ENCODE measurements at regions of chr7 and their contacts with region 1.

Region 1: DNA sequence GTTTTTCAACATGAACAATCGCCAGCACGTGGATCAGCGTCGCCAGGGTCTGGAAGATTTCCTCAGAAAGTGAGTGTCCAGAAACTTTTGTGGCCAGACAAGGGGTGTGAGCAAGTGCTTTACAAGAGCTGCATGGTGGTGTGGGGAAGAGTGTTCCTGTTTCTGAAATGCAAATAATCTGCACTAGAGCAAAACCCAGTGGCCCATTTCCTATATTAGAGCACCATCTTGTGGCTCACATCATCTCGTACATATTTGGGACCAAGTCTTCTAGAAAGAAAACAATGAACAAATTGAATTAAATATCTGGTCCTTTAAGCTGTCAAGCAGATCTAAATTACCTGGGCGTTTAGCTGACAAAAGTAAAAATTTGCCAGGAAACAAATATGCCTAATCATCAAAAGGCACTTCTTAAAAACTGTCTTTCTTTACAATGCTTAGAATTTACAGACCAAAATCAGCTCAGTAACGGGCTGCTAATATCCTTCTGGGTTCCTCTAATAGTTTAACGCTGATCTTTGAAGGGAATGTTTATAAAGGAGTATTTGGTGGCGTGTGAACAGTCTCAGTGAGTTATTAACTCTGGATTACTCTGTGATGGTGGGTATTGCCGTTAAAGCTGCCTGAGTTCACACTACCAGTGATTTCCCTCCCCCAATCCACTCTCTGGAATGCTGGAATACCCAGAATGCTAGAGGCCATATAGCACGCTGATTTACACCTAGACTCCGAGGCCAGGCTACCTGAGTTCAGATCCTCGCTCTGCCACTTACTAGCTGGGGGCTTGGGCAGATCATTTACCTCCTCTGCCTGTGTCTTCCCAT is 73.6 kb downstream of the SNX10 start:
- DNase-seq: no peak
- H3K4me3 ChIP-seq: no peak overlapping the region
- H3K27ac ChIP-seq: no peak overlapping the region
- H3K4me1 ChIP-seq: no peaks in the 10 kb centered on the region; a peak in 1 of 7 replicates
- H3K27me3 ChIP-seq: no peaks in the 10 kb centered on the region
- CTCF ChIP-seq: peak in 2 of 3 experiments; percentile 64 to 73; a peak in 3 of 4 replicates
- EP300 ChIP-seq: no peak
- POLR2A ChIP-seq: no peak
- RAD21 ChIP-seq: peak; percentile 95 to 98

Region 2: DNA sequence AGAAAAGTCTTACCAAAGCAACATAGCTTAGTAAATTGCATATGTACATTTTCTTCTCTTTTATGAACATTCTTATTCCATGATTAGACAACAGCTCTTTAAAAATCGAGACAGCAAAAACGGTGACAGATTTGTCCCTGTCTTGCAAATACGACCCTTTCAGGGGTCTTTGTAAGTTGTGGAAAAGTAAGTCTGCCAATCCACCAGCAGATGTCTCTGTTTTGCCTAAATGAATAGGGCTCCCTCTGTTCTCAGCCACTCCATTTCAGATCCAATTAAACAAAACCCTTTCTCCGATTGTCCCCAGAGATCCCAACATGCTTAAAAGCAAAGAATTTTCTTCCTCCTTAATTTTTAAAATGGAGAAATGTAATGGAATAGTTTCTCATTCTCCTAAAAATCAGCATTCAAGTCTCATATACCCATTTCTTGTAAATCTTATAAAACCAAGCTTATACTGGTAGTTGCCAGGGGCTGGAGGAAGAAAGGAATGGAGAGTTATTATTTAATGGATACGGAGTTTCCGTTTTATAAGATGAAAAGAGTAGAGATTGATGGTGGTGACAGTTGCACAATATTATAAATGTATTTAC is 274.3 kb before region 1 on chr7:
- CTCF ChIA-PET with region 1: interaction called, 15 read pairs
- POLR2A ChIA-PET with region 1: no interaction called
- DNase-seq: no peak
- H3K4me3 ChIP-seq: peak overlapping the region in 1 of 4 experiments; percentile 19; a peak in 1 of 8 replicates
- H3K27ac ChIP-seq: no peak overlapping the region
- H3K4me1 ChIP-seq: peaks cover 0 to 3% (median 3%) of the 10 kb centered on the region in 4 experiments; a peak in 3 of 7 replicates
- H3K27me3 ChIP-seq: no peaks in the 10 kb centered on the region
- CTCF ChIP-seq: peak in 2 of 3 experiments; percentile 63 to 76; a peak in 3 of 4 replicates
- EP300 ChIP-seq: no peak
- POLR2A ChIP-seq: no peak
- RAD21 ChIP-seq: peak; percentile 84 to 87

Region 3: GRCh38 chr7:26193432-26194207 is 171.7 kb before region 1 on chr7:
- CTCF ChIA-PET with region 1: interaction called, 9 read pairs
- POLR2A ChIA-PET with region 1: interaction called, 22 read pairs
- DNase-seq: no peak
- H3K4me3 ChIP-seq: no peak overlapping the region
- H3K27ac ChIP-seq: no peak overlapping the region
- H3K4me1 ChIP-seq: peaks cover 0 to 6% (median 0%) of the 10 kb centered on the region in 4 experiments; a peak in 3 of 7 replicates
- H3K27me3 ChIP-seq: no peaks in the 10 kb centered on the region
- CTCF ChIP-seq: no peak
- EP300 ChIP-seq: no peak
- POLR2A ChIP-seq: peak in 1 of 2 experiments; percentile 34; a peak in 2 of 3 replicates
- RAD21 ChIP-seq: no peak

Region 4: GRCh38 chr7:26337232-26337865 is 27.9 kb before region 1 on chr7:
- CTCF ChIA-PET with region 1: no interaction called
- POLR2A ChIA-PET with region 1: no interaction called
- DNase-seq: no peak
- H3K4me3 ChIP-seq: no peak overlapping the region
- H3K27ac ChIP-seq: no peak overlapping the region
- H3K4me1 ChIP-seq: no peaks in the 10 kb centered on the region; a peak in 2 of 7 replicates
- H3K27me3 ChIP-seq: no peaks in the 10 kb centered on the region
- CTCF ChIP-seq: no peak
- EP300 ChIP-seq: no peak
- POLR2A ChIP-seq: no peak
- RAD21 ChIP-seq: no peak

Region 5: DNA sequence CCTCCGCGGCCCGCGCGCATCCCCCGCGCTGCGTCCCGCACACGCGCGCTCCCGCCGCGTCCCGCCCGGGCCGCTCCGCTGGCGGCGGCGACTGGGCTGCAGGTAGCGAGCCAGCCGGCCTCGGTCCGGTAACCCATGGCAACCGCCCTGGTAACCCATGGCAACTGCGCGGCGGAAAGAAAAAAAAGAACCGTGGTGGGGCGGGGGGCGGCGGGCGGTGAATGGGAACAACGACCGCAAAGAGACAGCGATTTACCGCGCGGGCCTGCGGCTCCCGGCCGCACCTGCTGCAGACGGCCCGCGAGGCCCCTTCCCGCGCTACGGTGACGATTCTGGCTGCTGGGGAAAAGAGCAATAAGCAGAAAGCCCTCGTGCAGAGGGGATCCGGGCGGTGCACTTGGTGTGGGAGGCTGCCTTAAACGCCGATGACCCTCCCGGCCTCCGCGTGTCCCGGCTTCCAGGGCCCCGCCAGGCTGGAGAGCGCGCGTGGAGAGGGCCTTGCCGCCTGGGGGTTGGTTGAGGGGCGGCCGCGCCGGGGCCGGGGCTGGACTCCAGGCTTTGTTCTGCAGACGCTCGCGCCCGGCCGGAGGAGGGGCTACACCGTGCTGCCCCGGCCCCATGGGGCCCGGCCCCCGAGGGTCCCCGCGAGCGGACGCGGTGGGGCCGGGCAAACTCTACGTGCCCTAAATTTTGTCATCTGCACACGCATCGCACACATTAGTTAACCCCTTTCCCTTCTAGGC is 11.1 kb after region 1 on chr7:
- CTCF ChIA-PET with region 1: interaction called, 10 read pairs
- POLR2A ChIA-PET with region 1: no interaction called
- DNase-seq: peak in 1 of 2 experiments; percentile 95
- H3K4me3 ChIP-seq: peak overlapping the region; percentile 44 to 89 (median 78)
- H3K27ac ChIP-seq: no peak overlapping the region
- H3K4me1 ChIP-seq: peaks cover 0 to 2% (median 0%) of the 10 kb centered on the region in 4 experiments; a peak in 2 of 7 replicates
- H3K27me3 ChIP-seq: no peaks in the 10 kb centered on the region
- CTCF ChIP-seq: no peak
- EP300 ChIP-seq: no peak
- POLR2A ChIP-seq: no peak
- RAD21 ChIP-seq: no peak; a peak in 1 of 4 replicates

Region 6: DNA sequence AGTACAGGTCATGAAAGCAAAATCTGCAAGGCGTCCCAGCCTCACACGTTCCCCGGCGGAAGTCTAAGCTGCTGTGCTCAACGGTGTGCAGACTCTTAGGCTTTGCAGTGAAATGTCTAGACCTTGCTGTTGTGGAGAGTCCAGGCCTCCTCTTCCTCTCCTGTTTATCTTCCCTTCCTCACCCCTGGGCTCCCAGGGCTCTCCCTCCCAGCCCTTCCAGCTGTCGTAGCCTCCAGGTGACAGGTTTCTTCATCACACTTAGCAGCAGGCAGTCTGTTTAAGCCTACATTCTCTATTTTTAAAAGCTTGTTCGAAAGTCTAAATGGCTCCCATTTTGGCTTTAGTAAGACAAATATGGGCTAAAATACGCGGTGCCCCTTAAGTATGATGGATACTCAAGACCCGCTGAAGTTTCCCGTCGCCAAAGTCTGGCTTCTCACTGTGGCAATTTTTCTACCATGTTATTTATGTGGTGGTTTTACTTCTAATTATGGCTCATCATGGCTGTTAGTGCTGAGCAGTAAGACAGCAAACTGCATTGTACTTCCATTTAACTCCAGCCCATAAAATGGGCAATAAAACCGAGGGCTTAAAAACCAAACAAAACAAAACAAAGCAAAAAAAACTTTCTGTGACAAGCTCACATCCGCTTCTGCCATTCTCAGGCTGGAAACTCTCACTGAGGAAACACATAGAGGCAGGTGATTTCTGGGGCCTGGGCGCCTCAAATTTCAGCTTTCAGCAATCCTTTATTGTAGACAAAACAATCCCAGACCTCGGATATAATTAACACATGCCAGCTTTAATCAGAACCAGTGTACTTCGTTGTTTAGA is 169.6 kb after region 1 on chr7:
- CTCF ChIA-PET with region 1: interaction called, 13 read pairs
- POLR2A ChIA-PET with region 1: no interaction called
- DNase-seq: no peak
- H3K4me3 ChIP-seq: no peak overlapping the region
- H3K27ac ChIP-seq: no peak overlapping the region
- H3K4me1 ChIP-seq: no peaks in the 10 kb centered on the region
- H3K27me3 ChIP-seq: no peaks in the 10 kb centered on the region
- CTCF ChIP-seq: no peak
- EP300 ChIP-seq: no peak
- POLR2A ChIP-seq: no peak
- RAD21 ChIP-seq: no peak

Region 7: DNA sequence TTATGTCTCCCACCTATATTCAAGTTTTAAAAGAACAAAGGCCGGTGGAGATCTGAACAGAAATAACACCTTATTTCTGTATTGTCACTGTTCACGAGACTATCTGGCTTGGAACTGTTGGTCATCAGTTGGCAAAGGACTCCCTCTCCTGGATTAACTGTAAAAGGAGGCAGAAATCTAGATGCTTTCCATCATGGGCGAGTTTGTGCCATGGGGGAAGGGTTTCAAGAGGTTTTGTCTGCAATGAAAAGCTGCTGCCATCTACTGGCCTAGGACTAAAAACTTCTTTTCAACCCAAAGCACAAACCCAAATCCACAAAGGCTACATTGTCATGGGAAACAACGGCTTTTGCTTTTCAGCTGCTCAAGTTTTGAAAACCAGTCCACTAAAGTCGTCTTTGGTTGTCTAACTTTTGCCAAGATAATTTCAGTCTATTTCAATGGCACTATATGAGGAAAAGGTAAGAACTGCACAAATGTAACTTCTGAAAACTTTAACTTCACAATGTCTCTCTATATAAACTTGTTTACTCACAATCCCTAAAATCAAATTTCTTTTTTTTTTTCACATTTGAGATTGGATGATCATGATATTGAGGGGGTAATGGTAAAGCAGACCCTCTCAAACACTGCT is 302.3 kb after region 1 on chr7:
- CTCF ChIA-PET with region 1: interaction called, 59 read pairs
- POLR2A ChIA-PET with region 1: no interaction called
- DNase-seq: peak in 1 of 2 experiments; percentile 81
- H3K4me3 ChIP-seq: no peak overlapping the region
- H3K27ac ChIP-seq: no peak overlapping the region
- H3K4me1 ChIP-seq: no peaks in the 10 kb centered on the region
- H3K27me3 ChIP-seq: no peaks in the 10 kb centered on the region
- CTCF ChIP-seq: peak in 2 of 3 experiments; percentile 95 to 98; a peak in 3 of 4 replicates
- EP300 ChIP-seq: 0 out of 3 replicates have a peak, but pooled peaks of 1 of the 2 experiments have one; percentile 51
- POLR2A ChIP-seq: no peak
- RAD21 ChIP-seq: peak; percentile 100

Measured in H1 (cell line).